PC-9 (cell line): ENCODE measurements at regions of chr9 and their contacts with region 1.

Region 1: GRCh38 chr9:109401168-109401989 is 80.5 kb upstream of the EPB41L4B start:
- DNase-seq: peak; percentile 55 to 71
- H3K4me3 ChIP-seq: no peak overlapping the region
- H3K27ac ChIP-seq: no peak overlapping the region; the same call in 1 of the 2 replicates
- H3K4me1 ChIP-seq: no peaks in the 10 kb centered on the region
- H3K27me3 ChIP-seq: no peaks in the 10 kb centered on the region
- CTCF ChIP-seq: peak; percentile 89

Region 2: DNA sequence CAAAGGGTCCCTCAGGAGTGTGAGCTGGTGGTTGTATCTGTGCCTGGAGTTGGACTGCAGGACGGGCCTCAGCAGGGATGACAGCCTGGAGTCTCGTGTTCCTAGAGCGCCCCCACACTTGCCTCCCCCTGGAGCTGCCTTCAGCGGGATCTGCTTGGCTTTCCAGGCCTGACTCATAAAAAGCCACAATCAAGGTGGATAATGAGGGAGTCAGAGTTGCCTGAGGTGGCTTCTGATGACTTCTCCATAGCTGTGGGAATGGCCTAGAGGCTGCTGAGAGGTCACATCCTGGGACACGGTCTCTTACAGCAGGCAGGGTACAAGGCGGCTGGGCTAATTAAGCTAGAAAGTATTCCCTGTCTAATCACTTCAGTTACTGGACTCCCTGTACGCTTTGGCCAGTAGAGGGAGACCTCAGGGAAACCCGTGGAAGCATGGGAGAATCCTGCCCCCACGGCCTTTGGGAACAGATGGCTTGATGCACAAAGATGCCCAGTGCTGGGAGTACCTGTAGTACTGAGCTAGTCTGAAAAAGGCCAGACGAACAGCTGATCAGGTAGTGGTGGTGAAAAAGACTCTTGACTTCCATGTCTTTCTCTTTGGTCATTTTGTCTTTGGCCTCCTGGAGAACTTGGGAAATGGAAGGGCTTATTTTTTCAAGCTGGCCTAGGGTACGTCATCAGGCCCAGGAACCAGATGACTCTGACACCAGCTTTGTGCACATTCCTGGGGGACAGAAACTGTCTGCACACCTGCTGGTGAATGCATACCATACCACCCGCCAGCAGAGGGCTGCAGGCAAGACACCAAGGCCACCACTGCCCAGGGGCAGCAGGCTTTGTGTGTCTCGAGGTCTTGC is 218.2 kb before region 1 on chr9:
- CTCF ChIA-PET with region 1: no interaction called
- POLR2A ChIA-PET with region 1: no interaction called
- intact Hi-C with region 1: loop called (anchors 5 kb)
- DNase-seq: peak; percentile 47 to 54
- H3K4me3 ChIP-seq: no peak overlapping the region
- H3K27ac ChIP-seq: no peak overlapping the region
- H3K4me1 ChIP-seq: no peaks in the 10 kb centered on the region
- H3K27me3 ChIP-seq: no peaks in the 10 kb centered on the region
- CTCF ChIP-seq: peak; percentile 75

Region 3: GRCh38 chr9:109244157-109245132 is 156.9 kb before region 1 on chr9:
- CTCF ChIA-PET with region 1: no interaction called
- POLR2A ChIA-PET with region 1: no interaction called
- intact Hi-C with region 1: loop called (anchors 1 kb)
- DNase-seq: peak; percentile 62 to 71
- H3K4me3 ChIP-seq: no peak overlapping the region
- H3K27ac ChIP-seq: no peak overlapping the region
- H3K4me1 ChIP-seq: peaks cover 14% of the 10 kb centered on the region
- H3K27me3 ChIP-seq: no peaks in the 10 kb centered on the region
- CTCF ChIP-seq: peak; percentile 97

Region 4: DNA sequence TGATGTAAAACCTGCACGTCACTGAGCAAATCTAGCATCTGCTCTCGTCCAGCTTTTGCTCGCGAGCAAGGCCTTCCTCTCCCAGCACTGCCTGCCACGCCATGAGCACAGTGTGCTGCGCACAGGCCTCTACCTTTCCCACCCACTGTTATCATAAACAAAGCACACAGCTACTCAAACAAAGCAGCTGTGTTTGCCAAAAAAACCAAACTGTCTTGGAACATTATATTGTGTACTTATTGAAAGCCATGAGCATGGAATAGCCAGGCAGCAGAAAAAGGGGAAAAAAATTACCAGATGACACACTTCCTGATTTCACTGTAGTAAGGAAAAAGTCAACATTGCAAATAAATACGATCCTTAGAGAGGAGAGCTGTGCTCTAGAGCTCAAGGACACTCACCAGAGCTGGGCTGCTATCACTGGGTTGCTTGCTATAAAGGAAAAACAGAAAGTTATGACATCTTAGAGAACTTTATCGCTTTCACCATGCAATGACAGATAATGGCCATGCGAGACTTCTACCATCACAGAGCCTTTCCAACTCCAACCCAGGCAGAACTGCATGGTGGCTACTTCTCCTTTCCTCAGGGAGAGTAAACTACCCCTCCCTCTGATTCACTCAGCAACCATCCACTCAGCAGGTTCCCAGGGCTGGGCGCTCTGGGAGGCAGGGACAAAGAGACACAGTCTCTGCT is 150.2 kb before region 1 on chr9:
- CTCF ChIA-PET with region 1: no interaction called
- POLR2A ChIA-PET with region 1: interaction called, 4 read pairs
- intact Hi-C with region 1: loop called (anchors 1 kb)
- DNase-seq: peak; percentile 50 to 90
- H3K4me3 ChIP-seq: peak overlapping the region; percentile 33; the same call in 1 of the 2 replicates
- H3K27ac ChIP-seq: peak overlapping the region; percentile 95
- H3K4me1 ChIP-seq: peaks cover 79% of the 10 kb centered on the region
- H3K27me3 ChIP-seq: no peaks in the 10 kb centered on the region
- CTCF ChIP-seq: no peak

Region 5: DNA sequence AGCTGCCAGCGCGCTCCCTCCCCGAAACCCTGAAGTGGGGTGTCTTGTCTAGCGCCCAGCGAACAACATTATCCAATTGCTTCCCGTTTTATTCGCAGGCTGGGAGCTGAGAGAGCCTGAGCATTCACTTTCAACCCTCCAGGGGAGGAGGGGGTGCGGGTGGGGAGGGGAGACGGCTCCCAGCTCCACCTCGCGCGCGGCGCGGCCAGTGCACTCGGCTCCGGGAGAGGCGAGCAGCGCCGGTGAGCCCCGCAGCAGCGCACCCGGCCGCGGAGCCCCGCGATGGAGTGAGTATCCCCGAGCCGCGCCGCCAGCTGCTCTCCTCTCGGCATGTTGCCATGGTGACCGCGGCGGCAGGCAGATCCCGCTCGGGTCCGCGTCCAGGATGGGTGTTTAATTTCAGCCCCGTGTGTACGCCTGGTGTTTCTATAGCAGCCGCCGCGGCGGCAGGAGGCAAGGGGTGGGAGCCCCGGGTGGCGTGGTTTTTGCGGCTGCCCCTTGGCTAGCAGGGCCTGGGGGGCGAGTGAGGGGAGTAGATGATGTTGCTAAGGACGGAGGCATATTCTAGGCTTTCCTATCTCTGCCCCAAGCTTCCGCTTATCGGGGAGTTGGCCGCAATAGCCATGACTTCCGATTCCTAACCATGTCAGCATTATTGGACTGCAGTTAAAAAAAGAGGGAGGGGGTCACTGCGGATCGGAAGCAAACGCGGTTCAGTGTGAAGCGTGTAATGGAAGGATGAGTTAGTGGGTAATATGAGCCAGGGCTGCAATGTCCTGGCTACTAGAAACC is 239.4 kb after region 1 on chr9:
- CTCF ChIA-PET with region 1: no interaction called
- POLR2A ChIA-PET with region 1: no interaction called
- intact Hi-C with region 1: no loop called
- DNase-seq: peak in 1 of 2 experiments; percentile 55
- H3K4me3 ChIP-seq: peak overlapping the region; percentile 96
- H3K27ac ChIP-seq: no peak overlapping the region
- H3K4me1 ChIP-seq: peaks cover 5% of the 10 kb centered on the region; the same call in 1 of the 2 replicates
- H3K27me3 ChIP-seq: peaks cover 12% of the 10 kb centered on the region
- CTCF ChIP-seq: no peak